Common myeloid progenitor, CD34-positive (primary cell): ENCODE measurements at regions of chr3 and their contacts with region 1.

Region 1: GRCh38 chr3:119690043-119690656 is 12.7 kb upstream of the CFAP91 start:
- DNase-seq: peak in 2 of 3 donors; percentile 22 to 31
- H3K4me3 ChIP-seq: no peak overlapping the region
- H3K27ac ChIP-seq: no peak overlapping the region
- H3K4me1 ChIP-seq: no peaks in the 10 kb centered on the region
- H3K27me3 ChIP-seq: no peaks in the 10 kb centered on the region

Region 2: DNA sequence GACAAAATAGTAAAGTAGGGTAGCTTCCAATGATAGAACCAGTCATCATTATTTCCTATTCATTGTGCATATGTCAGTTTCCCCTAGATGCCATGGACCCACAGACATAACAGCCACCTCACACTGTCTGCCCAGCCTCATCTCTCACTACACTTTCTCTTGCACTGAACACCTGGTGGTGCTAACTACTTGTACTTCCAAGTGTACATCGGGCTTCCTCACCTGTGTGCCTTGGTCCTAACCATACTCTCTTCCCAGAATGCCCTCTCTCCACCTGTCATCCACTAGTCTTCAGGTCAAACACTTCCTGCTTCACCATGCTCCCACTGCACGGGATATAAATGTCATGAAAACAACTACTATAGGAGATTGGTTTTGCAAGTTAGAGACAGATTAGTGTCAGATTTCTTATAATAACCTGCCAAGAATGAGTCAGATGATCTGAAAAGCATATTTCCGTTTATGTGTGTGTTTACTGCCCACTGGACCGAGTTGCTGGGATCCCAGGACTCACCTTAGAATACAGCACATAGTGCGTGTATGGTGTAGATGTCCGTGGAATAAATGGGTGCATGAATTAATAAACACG is 71.2 kb before region 1 on chr3:
- CTCF ChIA-PET with region 1: no interaction called
- POLR2A ChIA-PET with region 1: no interaction called
- DNase-seq: no peak
- H3K4me3 ChIP-seq: no peak overlapping the region
- H3K27ac ChIP-seq: no peak overlapping the region
- H3K4me1 ChIP-seq: no peaks in the 10 kb centered on the region
- H3K27me3 ChIP-seq: no peaks in the 10 kb centered on the region

Region 3: DNA sequence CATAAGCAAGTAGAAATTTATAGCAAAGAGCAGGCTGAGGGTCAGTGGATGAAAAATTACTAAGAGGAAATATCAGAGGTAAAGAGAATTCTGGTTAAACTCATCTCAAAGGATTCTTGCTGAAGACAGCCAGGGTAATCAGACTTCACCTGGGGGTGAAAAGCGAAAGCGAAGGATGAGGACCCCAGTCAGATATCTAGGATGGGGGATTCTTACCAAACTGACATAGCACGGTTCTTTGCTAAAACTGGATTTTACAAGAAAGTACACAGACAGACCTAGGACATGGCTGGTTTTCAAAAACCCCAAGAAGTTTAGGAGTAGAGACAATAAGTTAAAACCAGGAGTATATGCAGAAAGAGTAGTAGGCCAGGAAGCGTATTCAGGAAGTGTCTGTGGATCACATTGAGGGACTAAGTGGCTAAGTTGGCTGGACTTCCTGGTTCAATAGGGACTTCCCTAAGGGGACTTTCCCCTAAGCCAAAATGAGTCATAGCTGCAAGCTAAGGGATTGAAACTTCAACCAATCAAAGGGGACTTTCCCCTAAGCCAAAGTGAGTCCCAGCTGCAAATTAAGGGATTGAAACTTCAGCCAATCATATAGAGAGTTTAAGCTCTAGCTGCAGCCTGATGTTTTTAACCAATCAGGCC is 10.2 kb after region 1 on chr3:
- CTCF ChIA-PET with region 1: interaction called, 10 read pairs
- POLR2A ChIA-PET with region 1: no interaction called
- DNase-seq: peak; percentile 58 to 89 (median 84)
- H3K4me3 ChIP-seq: no peak overlapping the region
- H3K27ac ChIP-seq: no peak overlapping the region
- H3K4me1 ChIP-seq: peaks cover 3 to 12% (median 10%) of the 10 kb centered on the region in 4 experiments
- H3K27me3 ChIP-seq: peaks cover 0 to 8% (median 2%) of the 10 kb centered on the region in 5 experiments

Region 4: DNA sequence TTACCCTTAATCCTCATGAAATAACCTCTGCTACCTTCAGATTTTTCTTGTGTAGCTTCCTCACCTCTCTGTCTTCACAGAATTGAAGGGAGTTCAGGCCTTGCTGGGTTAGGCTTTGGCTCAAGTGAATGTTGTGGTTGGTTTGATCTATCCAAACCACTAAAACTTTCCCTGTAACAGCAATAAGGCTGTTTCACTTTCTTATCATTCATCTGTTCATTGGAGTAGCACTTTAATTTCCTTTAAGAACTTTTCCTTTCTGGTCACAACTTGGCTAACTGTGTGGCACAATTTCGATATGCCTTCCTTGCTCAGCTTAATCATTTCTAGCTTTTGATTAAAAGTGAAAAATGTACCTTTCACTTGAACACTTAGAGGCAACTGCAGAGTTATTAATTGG is 221.6 kb after region 1 on chr3:
- CTCF ChIA-PET with region 1: no interaction called
- POLR2A ChIA-PET with region 1: no interaction called
- DNase-seq: no peak
- H3K4me3 ChIP-seq: no peak overlapping the region
- H3K27ac ChIP-seq: no peak overlapping the region
- H3K4me1 ChIP-seq: peaks cover 0 to 2% (median 0%) of the 10 kb centered on the region in 4 experiments
- H3K27me3 ChIP-seq: no peaks in the 10 kb centered on the region